Endothelial cell of umbilical vein (primary cell): ENCODE measurements at regions of chr14 and their contacts with region 1.

Region 1: DNA sequence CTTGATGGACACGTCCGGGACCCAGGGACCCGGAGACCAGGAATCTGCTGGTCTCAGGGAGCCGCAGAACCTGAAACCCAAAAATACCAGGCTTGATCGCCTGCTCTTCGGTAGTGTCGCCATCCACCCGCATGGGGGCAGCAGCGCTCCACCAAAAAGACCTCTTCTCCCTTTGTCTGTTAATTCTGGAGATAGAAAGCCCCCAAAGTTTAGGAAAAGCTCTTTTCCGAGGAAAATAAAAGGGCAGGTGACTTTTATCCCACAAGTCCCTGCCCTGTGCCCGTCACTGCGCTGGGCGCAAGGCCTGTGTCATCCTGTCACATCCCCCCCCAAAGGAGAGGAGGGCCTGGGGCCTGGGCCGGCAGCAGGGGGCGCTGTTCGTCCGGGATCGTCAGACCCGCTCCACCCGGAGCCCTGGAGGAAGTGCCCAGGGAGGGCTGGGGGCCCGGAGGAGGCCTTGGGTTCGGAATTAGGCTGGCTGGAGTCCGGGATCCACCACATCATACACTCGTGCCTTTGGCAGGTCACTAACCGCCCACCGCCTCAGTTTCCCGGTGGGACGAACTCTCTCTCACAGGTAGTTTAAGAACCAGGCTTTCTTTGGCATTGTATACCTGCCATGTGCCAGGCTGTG is 31.9 kb downstream of the DAD1 start:
- DNase-seq: peak; percentile 71
- H3K4me3 ChIP-seq: peak overlapping the region in 2 of 3 experiments; percentile 10 to 14
- H3K27ac ChIP-seq: peak overlapping the region; percentile 88
- H3K4me1 ChIP-seq: peaks cover 52% of the 10 kb centered on the region
- H3K27me3 ChIP-seq: no peaks in the 10 kb centered on the region
- CTCF ChIP-seq: peak; percentile 84 to 99
- POLR2A ChIP-seq: no peak

Region 2: GRCh38 chr14:22472935-22473854 is 83.9 kb before region 1 on chr14:
- CTCF ChIA-PET with region 1: interaction called, 15 read pairs
- POLR2A ChIA-PET with region 1: no interaction called
- dilution Hi-C with region 1: no loop called
- intact Hi-C with region 1: loop called (anchors 2 kb)
- DNase-seq: peak; percentile 72
- H3K4me3 ChIP-seq: no peak overlapping the region
- H3K27ac ChIP-seq: no peak overlapping the region
- H3K4me1 ChIP-seq: peaks cover 20% of the 10 kb centered on the region
- H3K27me3 ChIP-seq: peaks cover 0 to 5% of the 10 kb centered on the region in 2 experiments
- CTCF ChIP-seq: peak; percentile 49 to 52
- POLR2A ChIP-seq: no peak

Region 3: DNA sequence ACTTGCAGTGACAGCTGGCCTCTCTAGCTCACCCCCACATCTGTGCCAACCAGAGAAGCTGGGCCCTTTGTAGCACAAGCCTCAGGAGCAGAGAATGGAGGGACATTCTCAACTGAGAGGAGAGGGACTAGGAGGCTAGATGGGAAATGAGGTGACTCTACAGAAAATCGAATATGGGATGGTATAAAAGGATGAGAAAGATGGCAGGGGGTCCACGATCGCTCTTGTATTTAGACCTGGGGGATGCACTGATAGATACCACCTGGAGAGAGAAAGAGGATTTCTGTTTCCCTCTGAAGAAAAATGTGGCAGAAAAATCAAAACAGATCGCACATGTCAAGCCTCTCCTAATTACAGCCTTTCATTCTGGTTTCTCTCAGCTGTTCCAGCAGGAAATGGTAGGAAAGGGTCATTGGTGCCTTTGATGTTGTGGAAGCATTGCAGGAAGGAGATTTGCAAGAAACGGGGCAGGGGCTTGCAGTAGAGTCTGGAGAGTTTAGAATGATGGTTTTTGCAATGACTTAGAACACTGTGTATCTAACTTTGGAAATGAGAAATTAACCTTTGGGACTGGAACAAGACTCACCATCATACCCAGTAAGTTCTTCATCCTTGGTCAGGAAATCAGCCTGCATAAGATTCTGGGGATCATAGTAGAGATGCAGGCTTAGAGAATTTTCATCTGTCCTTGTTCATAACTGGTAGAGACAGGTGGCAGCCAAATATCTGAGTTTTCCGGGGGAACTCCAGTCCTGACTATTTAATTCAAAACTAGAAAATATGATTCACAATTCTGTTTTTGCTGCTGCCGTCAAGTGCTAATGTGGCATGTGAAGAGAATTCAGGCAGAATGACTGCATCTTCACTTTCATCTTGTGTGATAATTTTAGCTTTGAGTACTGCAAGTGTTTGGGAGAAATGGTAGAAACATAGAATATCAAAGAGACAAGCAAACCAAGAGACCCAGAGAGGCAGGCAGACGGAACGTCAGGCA is 66.9 kb before region 1 on chr14:
- CTCF ChIA-PET with region 1: no interaction called
- POLR2A ChIA-PET with region 1: no interaction called
- dilution Hi-C with region 1: no loop called
- intact Hi-C with region 1: no loop called
- DNase-seq: no peak
- H3K4me3 ChIP-seq: no peak overlapping the region
- H3K27ac ChIP-seq: no peak overlapping the region
- H3K4me1 ChIP-seq: no peaks in the 10 kb centered on the region
- H3K27me3 ChIP-seq: peaks cover 49 to 59% of the 10 kb centered on the region in 2 experiments
- CTCF ChIP-seq: no peak
- POLR2A ChIP-seq: no peak

Region 4: DNA sequence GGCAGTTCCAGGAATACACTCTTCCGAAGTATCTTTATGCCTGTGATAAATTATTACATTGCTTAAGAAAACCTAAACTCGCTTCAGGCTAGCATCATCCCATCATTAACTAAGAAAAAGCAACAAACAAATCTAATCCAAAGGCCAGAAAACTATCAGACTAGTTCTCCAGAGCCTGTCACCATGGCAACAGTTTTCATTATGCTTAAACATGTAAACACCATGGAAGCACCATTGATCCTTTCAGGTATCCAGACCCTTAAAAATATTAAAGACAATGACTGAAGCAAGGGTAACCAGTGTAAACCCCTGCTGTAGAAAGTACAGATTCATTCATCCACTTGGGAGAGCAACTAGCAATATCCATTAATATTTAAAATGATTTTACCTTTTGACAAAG is 22.1 kb after region 1 on chr14:
- CTCF ChIA-PET with region 1: no interaction called
- POLR2A ChIA-PET with region 1: no interaction called
- dilution Hi-C with region 1: no loop called
- intact Hi-C with region 1: no loop called
- DNase-seq: no peak
- H3K4me3 ChIP-seq: no peak overlapping the region
- H3K27ac ChIP-seq: no peak overlapping the region
- H3K4me1 ChIP-seq: peaks cover 4% of the 10 kb centered on the region
- H3K27me3 ChIP-seq: no peaks in the 10 kb centered on the region
- CTCF ChIP-seq: no peak
- POLR2A ChIP-seq: no peak

Region 5: DNA sequence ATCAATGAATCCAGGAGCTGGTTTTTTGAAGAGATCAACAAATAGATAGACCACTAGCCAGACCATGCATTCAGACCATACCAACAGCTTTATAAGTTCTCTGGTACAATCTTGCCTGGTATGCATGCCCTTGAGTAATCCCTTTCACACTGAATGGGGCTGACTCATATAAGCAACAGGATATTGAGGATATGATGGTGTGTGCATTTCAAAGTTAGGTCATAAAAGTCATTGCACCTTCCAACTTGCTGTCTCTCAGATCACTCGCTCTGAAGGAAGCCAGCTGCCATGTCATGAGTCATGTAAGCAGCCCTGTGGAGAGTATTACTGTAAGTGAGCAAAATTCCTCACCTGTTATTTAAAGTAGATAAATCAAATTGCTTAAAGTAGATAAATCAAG is 132.1 kb after region 1 on chr14:
- CTCF ChIA-PET with region 1: no interaction called
- POLR2A ChIA-PET with region 1: no interaction called
- dilution Hi-C with region 1: no loop called
- intact Hi-C with region 1: loop called (anchors 2 kb)
- DNase-seq: peak; percentile 96
- H3K4me3 ChIP-seq: no peak overlapping the region
- H3K27ac ChIP-seq: peak overlapping the region; percentile 91
- H3K4me1 ChIP-seq: peaks cover 32% of the 10 kb centered on the region
- H3K27me3 ChIP-seq: no peaks in the 10 kb centered on the region
- CTCF ChIP-seq: no peak
- POLR2A ChIP-seq: peak; percentile 40

Region 6: GRCh38 chr14:22748631-22749068 is 191.5 kb after region 1 on chr14:
- CTCF ChIA-PET with region 1: no interaction called
- POLR2A ChIA-PET with region 1: no interaction called
- dilution Hi-C with region 1: no loop called
- intact Hi-C with region 1: no loop called
- DNase-seq: no peak
- H3K4me3 ChIP-seq: no peak overlapping the region
- H3K27ac ChIP-seq: no peak overlapping the region
- H3K4me1 ChIP-seq: peaks cover 4% of the 10 kb centered on the region
- H3K27me3 ChIP-seq: no peaks in the 10 kb centered on the region
- CTCF ChIP-seq: no peak
- POLR2A ChIP-seq: no peak

Region 7: DNA sequence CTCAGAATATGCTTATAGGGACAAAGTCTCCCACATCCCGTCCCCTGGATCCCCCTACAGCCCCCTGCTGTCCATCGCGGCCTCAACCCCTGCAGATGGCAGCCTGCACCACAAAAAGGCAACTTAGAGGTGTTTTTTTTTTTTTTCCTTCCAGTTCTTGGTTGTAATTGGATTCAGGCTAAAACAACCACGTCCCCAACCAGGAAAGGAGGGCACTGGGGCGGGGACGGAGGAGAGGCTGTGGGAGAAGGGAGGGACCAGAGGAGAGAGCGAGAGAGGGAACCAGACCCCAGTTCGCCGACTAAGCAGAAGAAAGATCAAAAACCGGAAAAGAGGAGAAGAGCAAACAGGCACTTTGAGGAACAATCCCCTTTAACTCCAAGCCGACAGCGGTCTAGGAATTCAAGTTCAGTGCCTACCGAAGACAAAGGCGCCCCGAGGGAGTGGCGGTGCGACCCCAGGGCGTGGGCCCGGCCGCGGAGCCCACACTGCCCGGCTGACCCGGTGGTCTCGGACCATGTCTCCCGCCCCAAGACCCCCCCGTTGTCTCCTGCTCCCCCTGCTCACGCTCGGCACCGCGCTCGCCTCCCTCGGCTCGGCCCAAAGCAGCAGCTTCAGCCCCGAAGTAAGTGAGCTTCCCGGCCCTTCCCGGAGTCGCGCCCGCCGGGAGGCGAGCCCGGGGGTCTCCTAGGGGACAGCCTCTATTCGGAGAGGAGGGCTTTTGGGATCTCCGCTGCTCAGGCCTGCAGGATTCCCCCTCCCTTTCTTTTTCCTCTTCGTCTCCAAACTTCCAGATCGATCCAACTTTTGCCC is 279.4 kb after region 1 on chr14 and contains the start of gene MMP14:
- CTCF ChIA-PET with region 1: interaction called, 6 read pairs
- POLR2A ChIA-PET with region 1: no interaction called
- dilution Hi-C with region 1: no loop called
- intact Hi-C with region 1: loop called (anchors 5 kb)
- DNase-seq: peak; percentile 92
- H3K4me3 ChIP-seq: peak within 1 kb of the TSS; percentile 75 to 94 (median 86)
- H3K27ac ChIP-seq: peak within 1 kb of the TSS; percentile 84
- H3K4me1 ChIP-seq: peaks cover 32% of the 10 kb centered on the region
- H3K27me3 ChIP-seq: no peaks in the 10 kb centered on the region
- CTCF ChIP-seq: peak; percentile 26 to 54
- POLR2A ChIP-seq: peak; percentile 95
- total RNA-seq, gene MMP14: 603 and 615 TPM in 2 replicates

Region 8: GRCh38 chr14:22900081-22900799 is 343.1 kb after region 1 on chr14:
- CTCF ChIA-PET with region 1: interaction called, 18 read pairs
- POLR2A ChIA-PET with region 1: no interaction called
- dilution Hi-C with region 1: no loop called
- intact Hi-C with region 1: loop called (anchors 1 kb)
- DNase-seq: peak; percentile 70
- H3K4me3 ChIP-seq: no peak overlapping the region
- H3K27ac ChIP-seq: no peak overlapping the region
- H3K4me1 ChIP-seq: no peaks in the 10 kb centered on the region
- H3K27me3 ChIP-seq: no peaks in the 10 kb centered on the region
- CTCF ChIP-seq: peak; percentile 38 to 65
- POLR2A ChIP-seq: no peak

Region 9: DNA sequence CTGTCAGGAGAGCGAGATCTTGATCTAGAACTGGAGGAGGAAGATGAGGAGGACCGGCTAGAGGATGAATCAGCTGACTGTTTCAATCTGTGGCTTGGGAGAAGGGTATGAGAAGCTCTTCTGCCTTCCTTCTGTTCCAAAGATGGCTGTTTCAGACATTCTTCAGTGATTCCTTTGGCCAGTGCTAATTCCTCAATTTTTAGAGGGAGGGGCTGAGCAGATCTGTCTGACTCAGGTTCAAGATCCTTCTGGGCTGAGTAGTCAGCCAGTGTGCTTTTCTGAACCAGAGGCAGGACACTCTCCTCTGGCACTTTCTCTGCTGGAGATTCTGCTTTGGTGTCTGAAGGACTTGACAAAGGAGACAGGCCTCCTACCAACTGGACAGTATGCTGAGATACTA is 522.6 kb after region 1 on chr14:
- CTCF ChIA-PET with region 1: no interaction called
- POLR2A ChIA-PET with region 1: no interaction called
- dilution Hi-C with region 1: no loop called
- intact Hi-C with region 1: no loop called
- DNase-seq: no peak
- H3K4me3 ChIP-seq: no peak overlapping the region
- H3K27ac ChIP-seq: no peak overlapping the region
- H3K4me1 ChIP-seq: peaks cover 24% of the 10 kb centered on the region
- H3K27me3 ChIP-seq: no peaks in the 10 kb centered on the region
- CTCF ChIP-seq: no peak
- POLR2A ChIP-seq: no peak